Body of pancreas (tissue), 4 donors: ENCODE measurements at regions of chr17 and their contacts with region 1.

Region 1: DNA sequence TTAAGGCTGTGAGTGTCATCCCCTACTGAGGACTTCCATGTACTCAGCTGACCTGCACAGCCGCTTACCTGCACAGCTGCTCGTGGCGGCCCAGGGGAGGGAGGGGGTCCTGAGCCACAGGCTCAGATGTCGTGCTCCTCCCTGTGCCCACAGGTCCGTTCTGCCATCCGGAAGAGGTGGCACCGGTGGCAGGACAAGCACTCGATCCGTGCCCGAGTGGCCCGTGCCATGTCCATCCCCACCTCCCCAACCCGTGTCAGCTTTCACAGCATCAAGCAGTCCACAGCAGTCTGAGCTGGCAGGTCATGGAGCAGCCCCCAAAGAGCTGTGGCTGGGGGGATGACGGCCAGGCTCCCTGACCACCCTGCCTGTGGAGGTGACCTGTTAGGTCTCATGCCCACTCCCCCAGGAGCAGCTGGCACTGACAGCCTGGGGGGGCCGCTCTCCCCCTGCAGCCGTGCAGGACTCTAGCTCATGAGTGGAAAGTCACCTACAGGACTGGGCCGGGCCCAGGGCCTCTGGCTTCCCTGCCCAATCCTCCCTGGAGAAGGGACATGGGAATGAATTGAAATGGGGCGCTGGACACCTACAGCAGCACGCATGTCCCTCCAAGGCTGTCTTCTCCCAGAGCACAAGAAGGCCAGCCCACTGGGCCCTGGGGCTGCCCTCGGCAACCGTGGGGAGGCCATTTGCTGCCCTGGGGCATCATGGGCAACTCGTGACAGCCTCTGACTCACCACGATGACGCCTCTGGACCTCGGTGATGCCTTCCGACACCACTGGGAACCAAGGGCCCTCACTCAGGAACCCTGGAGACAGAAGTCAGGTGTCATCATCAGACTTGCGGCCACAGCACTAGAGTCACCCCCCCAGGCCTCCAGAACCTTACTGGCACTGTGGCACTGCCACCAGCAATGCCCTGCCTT is 9.9 kb upstream of the SPPL2C start:
- DNase-seq: no peak
- ATAC-seq: no peak
- H3K4me3 ChIP-seq: no peak overlapping the region
- H3K27ac ChIP-seq: no peak overlapping the region
- H3K4me1 ChIP-seq: no peaks in the 10 kb centered on the region
- H3K27me3 ChIP-seq: no peaks in the 10 kb centered on the region
- CTCF ChIP-seq: no peak
- POLR2A ChIP-seq: no peak

Region 2: DNA sequence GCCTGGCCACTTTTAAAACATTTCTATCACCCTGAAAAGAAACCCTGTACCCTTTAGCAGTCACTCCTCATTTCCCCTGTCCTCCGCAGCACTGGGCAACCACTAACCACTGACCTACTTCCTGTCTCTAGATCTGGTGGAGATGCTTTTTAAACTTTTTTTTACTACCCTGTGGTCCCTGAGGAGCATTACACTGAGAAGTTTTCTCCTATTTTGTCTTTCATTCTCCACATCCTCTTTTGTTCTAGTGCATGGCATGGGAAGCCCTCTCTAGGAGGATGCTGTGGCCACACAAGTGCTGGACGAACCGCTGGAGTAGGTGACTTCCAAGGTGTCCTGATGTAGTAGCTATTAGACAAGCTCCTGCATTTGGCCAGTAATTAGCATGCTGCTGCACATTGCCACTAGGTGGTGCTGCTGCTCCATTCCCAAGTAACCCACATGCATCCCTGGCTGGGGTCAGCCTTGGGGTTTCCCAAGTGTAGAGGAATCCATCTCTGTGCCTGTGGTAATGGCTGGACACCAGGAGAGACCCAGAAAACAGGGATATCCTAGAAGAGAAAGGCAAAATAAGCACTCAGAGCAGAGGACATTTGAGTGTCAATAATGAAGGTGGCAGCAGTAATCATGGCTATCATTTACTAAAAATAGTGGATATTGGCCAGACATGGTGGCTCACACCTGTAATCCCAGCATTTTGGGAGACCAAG is 194.4 kb before region 1 on chr17:
- intact Hi-C with region 1: loop called (anchors 5 kb)
- DNase-seq: peak; percentile 72 to 78 (median 75)
- ATAC-seq: peak; percentile 84
- H3K4me3 ChIP-seq: no peak overlapping the region
- H3K27ac ChIP-seq: no peak overlapping the region
- H3K4me1 ChIP-seq: no peaks in the 10 kb centered on the region
- H3K27me3 ChIP-seq: no peaks in the 10 kb centered on the region
- CTCF ChIP-seq: peak; percentile 93 to 97 (median 95)
- POLR2A ChIP-seq: no peak

Region 3: DNA sequence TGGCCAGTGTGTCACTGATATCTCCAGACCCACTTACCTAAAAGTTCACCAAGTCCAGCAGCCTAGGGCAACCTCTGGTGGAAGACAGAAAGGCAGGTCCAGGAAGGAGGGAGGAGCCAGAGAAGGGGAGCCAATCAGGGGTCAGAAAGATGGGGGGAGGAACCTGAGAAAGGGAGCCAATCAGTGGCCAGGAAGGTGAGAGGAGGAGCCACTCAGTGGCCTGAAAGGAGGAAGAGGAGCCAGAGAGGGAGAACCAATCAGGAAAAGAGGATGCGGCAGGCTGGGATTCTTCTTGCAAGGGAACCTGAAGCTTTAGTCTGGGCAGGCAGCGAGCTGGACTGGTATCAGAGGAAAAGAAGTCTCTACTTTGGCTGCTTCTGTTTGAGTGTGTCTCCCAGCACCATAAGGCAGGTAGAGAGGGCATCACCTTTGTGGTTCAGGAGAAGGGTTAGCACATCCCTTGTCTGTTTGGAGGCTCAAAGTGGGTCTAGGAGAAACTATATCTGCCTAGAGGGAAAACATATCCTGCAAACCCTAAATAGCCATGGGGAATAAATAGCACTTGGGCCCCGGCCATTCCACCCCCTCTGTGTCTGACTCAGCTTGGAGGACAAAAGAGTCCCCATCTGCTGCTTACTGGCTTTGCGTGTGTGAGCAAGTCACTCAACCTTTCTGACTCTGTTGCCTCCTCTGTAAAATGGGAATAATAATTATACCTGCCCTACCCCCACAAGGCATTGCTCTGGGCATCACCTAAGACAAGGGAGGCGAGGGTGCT is 94.0 kb before region 1 on chr17:
- intact Hi-C with region 1: no loop called
- DNase-seq: peak in 1 of 4 donors; percentile 19
- ATAC-seq: peak; percentile 24
- H3K4me3 ChIP-seq: no peak overlapping the region
- H3K27ac ChIP-seq: no peak overlapping the region
- H3K4me1 ChIP-seq: no peaks in the 10 kb centered on the region
- H3K27me3 ChIP-seq: no peaks in the 10 kb centered on the region
- CTCF ChIP-seq: no peak
- POLR2A ChIP-seq: no peak